ENCODE measurements at regions of chr7 and their contacts with region 1.

Region 1: GRCh38 chr7:129471402-129471827 is 30.9 kb upstream of the SMKR1 start:
- DNase-seq: no peak
- H3K4me3 ChIP-seq: no peak overlapping the region
- H3K27ac ChIP-seq: no peak overlapping the region
- H3K4me1 ChIP-seq: no peaks in the 10 kb centered on the region
- H3K27me3 ChIP-seq: no peaks in the 10 kb centered on the region
- CTCF ChIP-seq: no peak
- POLR2A ChIP-seq: no peak

Region 2: GRCh38 chr7:129298268-129298893 is 173.0 kb before region 1 on chr7:
- intact Hi-C with region 1: no loop called
- DNase-seq: no peak
- H3K4me3 ChIP-seq: no peak overlapping the region
- H3K27ac ChIP-seq: no peak overlapping the region
- H3K4me1 ChIP-seq: no peaks in the 10 kb centered on the region
- H3K27me3 ChIP-seq: no peaks in the 10 kb centered on the region
- CTCF ChIP-seq: peak; percentile 37 to 59 (median 58)
- POLR2A ChIP-seq: no peak

Region 3: DNA sequence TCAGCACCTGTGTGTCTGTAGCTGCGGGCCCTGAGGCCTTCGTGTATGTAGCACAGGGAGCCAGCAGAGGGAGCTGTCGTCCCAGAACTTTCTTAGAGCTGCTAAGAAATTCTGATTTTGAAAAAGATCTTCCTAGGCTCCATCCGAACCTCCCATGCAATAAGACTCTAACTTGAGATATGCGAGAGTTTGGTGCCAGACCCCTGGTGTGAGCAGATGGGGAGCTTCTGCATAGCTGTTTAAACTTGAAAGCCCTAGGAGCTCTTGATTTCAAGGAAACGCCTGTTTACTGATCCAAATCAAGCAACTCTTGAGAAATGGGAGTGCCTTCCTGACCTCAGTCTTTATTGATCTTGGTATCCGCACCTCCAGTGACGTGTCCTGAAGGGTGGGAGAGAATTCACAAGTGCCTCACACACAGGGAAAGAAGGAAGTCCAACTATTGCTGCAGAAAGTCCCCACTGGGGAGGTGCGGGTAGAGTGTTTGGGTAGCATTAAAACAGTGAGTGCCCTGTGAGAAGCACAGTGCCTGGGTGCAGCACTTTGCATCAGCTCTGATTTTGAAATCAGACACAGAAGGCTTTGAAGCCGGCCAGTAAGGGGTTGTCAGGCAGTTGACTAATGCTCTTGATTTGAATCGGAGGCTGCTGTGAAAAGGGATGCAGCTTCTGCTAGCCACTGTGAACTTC is 103.6 kb before region 1 on chr7:
- intact Hi-C with region 1: loop called (anchors 10 kb)
- DNase-seq: peak; percentile 63 to 79
- H3K4me3 ChIP-seq: peak overlapping the region in 1 of 3 donors; percentile 10
- H3K27ac ChIP-seq: no peak overlapping the region
- H3K4me1 ChIP-seq: no peaks in the 10 kb centered on the region
- H3K27me3 ChIP-seq: no peaks in the 10 kb centered on the region
- CTCF ChIP-seq: peak in 2 of 3 donors; percentile 84 to 90
- POLR2A ChIP-seq: no peak

Region 4: DNA sequence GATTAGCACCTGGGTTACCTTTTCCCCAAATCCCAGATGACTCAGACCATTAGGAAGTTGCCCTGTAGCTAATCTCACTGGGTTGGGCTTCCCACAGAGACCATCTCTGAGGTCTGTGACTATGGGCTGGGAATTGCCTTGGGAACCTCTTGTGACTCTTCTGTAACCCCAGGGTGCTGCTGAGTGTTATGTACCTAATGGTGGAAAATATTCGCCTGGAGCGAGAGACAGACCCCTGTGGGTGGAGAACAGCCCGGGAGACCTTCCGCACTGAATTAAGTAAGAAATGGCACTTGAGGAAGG is 17.2 kb before region 1 on chr7:
- intact Hi-C with region 1: no loop called
- DNase-seq: no peak
- H3K4me3 ChIP-seq: no peak overlapping the region
- H3K27ac ChIP-seq: no peak overlapping the region
- H3K4me1 ChIP-seq: no peaks in the 10 kb centered on the region
- H3K27me3 ChIP-seq: no peaks in the 10 kb centered on the region
- CTCF ChIP-seq: no peak
- POLR2A ChIP-seq: no peak

Measured in breast epithelium (tissue), 4 donors.